OCI-LY7 (cell line): ENCODE measurements at regions of chr1 and their contacts with region 1.

Region 1: DNA sequence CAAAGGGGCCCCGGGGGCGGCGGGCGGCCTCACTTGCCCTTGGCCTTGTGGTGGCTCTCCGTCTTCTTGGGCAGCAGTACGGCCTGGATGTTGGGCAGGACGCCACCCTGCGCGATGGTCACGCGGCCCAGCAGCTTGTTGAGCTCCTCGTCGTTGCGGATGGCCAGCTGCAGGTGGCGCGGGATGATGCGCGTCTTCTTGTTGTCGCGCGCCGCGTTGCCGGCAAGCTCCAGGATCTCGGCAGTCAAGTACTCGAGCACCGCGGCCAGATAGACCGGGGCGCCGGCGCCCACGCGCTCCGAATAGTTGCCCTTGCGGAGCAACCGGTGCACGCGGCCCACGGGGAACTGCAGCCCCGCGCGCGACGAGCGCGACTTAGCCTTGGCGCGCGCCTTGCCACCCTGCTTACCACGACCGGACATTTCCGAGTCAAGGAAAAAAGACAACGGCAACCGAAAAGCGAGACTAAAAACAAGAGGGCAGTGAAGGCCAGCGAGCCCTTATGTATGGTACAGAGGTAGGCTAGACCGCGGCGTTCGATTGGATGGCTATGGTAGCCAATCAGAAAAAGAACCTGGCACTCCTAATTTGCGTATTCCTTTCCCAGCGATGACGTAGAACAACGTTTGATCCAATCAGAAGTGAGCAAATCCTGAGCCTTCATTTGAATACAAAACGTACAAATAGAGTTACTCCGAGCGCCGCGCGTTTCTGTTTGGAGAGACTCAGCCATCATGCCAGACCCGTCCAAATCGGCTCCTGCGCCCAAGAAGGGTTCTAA is 29.6 kb upstream of the RNF187 start:
- DNase-seq: peak; percentile 99
- H3K4me3 ChIP-seq: peak overlapping the region; percentile 78
- H3K27ac ChIP-seq: peak overlapping the region; percentile 94
- H3K4me1 ChIP-seq: peaks cover 39% of the 10 kb centered on the region
- CTCF ChIP-seq: peak; percentile 57; the same call in 1 of the 2 replicates

Region 2: GRCh38 chr1:228139944-228140656 is 317.5 kb before region 1 on chr1 and contains the start of gene GUK1:
- CTCF ChIA-PET with region 1: no interaction called
- POLR2A ChIA-PET with region 1: no interaction called
- intact Hi-C with region 1: loop called (anchors 2 kb)
- DNase-seq: peak; percentile 100
- H3K4me3 ChIP-seq: peak within 1 kb of the TSS; percentile 92
- H3K27ac ChIP-seq: peak within 1 kb of the TSS; percentile 79
- H3K4me1 ChIP-seq: peaks cover 77% of the 10 kb centered on the region
- CTCF ChIP-seq: 0 out of 2 replicates have a peak, but pooled peaks have one; percentile 20
- total RNA-seq, gene GUK1: 197 and 201 TPM in 2 replicates

Region 3: GRCh38 chr1:228212966-228213844 is 244.4 kb before region 1 on chr1:
- CTCF ChIA-PET with region 1: no interaction called
- POLR2A ChIA-PET with region 1: no interaction called
- intact Hi-C with region 1: loop called (anchors 2 kb)
- DNase-seq: peak; percentile 91
- H3K4me3 ChIP-seq: peak overlapping the region; percentile 65
- H3K27ac ChIP-seq: peak overlapping the region; percentile 52
- H3K4me1 ChIP-seq: peaks cover 4% of the 10 kb centered on the region
- CTCF ChIP-seq: peak; percentile 66

Region 4: DNA sequence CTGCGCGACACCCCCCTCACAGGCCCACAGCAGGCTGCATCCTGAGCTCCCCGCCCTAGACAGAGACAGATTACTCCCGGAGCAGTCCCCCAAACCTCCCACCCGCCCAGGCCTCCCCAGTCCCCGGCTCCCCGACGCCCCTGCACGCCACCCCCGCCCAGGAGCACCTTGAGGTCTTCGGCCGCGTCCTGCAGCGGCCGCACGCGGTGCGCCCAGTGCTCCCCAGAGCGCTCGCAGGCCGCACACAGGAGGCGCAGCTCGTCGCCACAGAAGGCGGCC is 51.7 kb before region 1 on chr1:
- CTCF ChIA-PET with region 1: no interaction called
- POLR2A ChIA-PET with region 1: interaction called, 13 read pairs
- intact Hi-C with region 1: loop called (anchors 1 kb)
- DNase-seq: peak; percentile 58
- H3K4me3 ChIP-seq: peak overlapping the region; percentile 100
- H3K27ac ChIP-seq: peak overlapping the region; percentile 60
- H3K4me1 ChIP-seq: peaks cover 22% of the 10 kb centered on the region
- CTCF ChIP-seq: no peak

Region 5: GRCh38 chr1:228486596-228487335 is 29.2 kb after region 1 on chr1:
- CTCF ChIA-PET with region 1: interaction called, 3 read pairs
- POLR2A ChIA-PET with region 1: interaction called, 74 read pairs
- intact Hi-C with region 1: no loop called
- DNase-seq: peak; percentile 94
- H3K4me3 ChIP-seq: peak overlapping the region; percentile 97
- H3K27ac ChIP-seq: peak overlapping the region; percentile 92
- H3K4me1 ChIP-seq: peaks cover 41% of the 10 kb centered on the region
- CTCF ChIP-seq: no peak